Dendritic cell treated with granulocyte-macrophage colony-stimulating factor and Interleukin-4, amounts not matched to agents 40 ng/mL and 50 ng/mL, for 4 days (primary cell): ENCODE measurements at regions of chr16 and their contacts with region 1.

Region 1: GRCh38 chr16:21656795-21657768 is 4.7 kb upstream of the IGSF6 start:
- H3K4me3 Mint-ChIP-seq: peak overlapping the region; percentile 17
- H3K27ac Mint-ChIP-seq: peak overlapping the region; percentile 70
- H3K4me1 Mint-ChIP-seq: peaks cover 77% of the 10 kb centered on the region
- H3K27me3 Mint-ChIP-seq: no peaks in the 10 kb centered on the region

Region 2: GRCh38 chr16:21626659-21627277 is 30.3 kb before region 1 on chr16:
- intact Hi-C with region 1: no loop called
- H3K4me3 Mint-ChIP-seq: no peak overlapping the region
- H3K27ac Mint-ChIP-seq: peak overlapping the region; percentile 82
- H3K4me1 Mint-ChIP-seq: peaks cover 33% of the 10 kb centered on the region
- H3K27me3 Mint-ChIP-seq: no peaks in the 10 kb centered on the region

Region 3: GRCh38 chr16:21708533-21709115 is 51.5 kb after region 1 on chr16:
- intact Hi-C with region 1: loop called (anchors 1 kb)
- H3K4me3 Mint-ChIP-seq: no peak overlapping the region
- H3K27ac Mint-ChIP-seq: no peak overlapping the region
- H3K4me1 Mint-ChIP-seq: peaks cover 17% of the 10 kb centered on the region
- H3K27me3 Mint-ChIP-seq: no peaks in the 10 kb centered on the region